ENCODE measurements at regions of chr3 and their contacts with region 1.

Region 1: DNA sequence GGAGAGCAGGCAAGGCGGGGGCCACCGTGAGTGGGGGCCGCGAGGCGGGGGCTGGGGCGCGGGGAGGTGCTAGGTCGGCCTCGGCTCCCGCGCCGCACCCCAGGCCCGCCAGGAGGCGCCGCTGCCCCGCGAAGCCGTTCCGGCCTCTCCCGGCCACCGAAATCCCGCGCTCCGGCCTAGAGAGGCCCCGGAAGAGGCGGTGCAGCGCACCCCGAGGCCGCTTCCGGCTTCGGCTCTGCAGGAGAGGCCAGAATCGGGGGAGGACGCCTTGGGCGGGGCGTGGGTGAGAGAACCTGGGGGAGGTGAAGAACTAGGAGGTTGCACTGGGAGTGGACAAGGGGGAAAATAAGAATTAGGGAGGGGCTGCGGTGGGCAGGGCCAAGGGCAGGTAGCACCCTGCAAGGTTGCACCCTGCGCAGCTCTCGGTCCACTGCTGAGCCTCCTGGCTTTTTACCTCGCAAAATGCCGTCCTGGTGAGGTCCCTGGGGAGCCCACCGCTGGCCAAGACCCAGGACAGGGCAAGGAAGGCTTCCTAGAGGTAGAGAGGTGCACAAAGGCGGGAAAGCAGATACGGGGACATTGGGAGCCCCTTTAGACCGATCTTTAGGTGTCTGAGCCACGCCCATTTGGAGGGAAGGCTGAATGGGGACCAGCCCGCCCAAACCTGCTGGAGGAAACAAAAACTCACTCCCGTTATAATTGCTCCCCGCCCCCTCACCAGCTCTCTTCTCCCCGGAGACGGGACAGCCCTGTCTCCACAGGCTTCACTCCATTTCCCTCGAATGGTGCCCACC is 8.4 kb upstream of the GNAI2 start:
- DNase-seq: peak; percentile 93
- H3K4me3 Mint-ChIP-seq: peak overlapping the region; percentile 82
- H3K27ac Mint-ChIP-seq: peak overlapping the region; percentile 91
- H3K4me1 Mint-ChIP-seq: peaks cover 35% of the 10 kb centered on the region
- H3K27me3 Mint-ChIP-seq: peaks cover 10% of the 10 kb centered on the region

Region 2: DNA sequence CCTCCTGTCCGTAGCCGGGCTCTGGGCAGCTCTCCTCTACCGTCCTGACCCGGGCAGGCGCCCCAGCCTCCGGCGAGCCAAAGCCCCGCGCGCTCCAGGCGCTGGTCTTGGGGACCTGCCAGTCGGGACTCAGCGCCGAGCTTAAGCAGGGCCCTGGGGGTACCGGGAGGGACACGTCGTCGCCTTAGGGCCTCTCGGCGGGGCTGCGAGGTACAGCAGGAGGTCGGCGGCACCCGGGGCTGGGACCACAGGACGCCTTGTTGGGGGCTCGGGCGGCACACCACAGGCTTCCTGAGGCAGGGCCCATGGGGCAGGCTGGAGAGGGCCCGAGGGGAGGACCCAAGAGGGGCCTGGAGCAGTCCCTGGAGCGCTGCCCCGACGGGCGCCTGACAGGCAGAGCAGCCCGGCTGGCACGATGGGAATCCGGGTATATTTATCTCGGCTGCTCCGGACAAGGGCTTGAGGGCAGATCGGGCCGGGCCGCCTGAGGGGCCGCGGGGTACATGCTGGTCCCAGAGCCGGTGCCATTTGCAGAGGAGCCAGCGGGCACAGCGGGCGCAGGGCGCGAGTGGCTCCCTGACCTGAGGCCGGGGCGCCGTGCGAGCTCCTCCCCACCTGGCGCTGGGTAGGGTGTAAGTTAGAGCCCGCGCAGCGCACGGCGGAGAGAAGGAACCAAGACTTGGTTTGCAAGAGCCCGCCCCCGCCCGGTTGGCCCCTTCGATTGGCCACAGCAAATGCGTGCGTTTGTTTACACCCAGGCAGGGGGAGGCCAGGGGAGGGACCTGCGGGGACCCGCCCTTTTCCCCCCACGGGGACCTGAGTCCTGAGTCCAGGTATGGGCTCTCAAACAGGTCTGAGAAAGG is 21.9 kb before region 1 on chr3:
- CTCF ChIA-PET with region 1: interaction called, 27 read pairs
- POLR2A ChIA-PET with region 1: no interaction called
- DNase-seq: peak; percentile 42
- H3K4me3 Mint-ChIP-seq: no peak overlapping the region
- H3K27ac Mint-ChIP-seq: no peak overlapping the region
- H3K4me1 Mint-ChIP-seq: peaks cover 2% of the 10 kb centered on the region
- H3K27me3 Mint-ChIP-seq: peaks cover 48% of the 10 kb centered on the region

Region 3: DNA sequence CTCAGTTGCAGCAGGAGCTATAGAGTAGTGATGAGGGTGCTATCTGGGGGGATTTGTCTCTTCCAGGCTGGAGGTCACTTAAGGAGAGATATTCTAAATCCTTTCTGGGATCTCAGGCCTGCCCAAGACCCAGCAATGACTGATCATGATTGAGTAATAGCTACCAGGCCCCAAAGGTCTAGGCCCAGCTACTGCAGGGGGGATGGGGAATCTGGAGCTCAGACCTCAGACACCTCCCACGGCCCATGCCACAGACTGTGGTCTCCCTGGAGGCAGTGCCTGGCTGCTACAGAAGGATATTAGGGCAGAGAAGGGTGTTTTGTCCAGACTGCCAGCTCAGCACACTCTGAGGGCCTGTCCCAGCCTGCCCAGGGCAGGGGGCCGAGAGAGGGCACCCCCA is 15.7 kb before region 1 on chr3:
- CTCF ChIA-PET with region 1: interaction called, 27 read pairs
- POLR2A ChIA-PET with region 1: no interaction called
- DNase-seq: no peak
- H3K4me3 Mint-ChIP-seq: no peak overlapping the region
- H3K27ac Mint-ChIP-seq: no peak overlapping the region
- H3K4me1 Mint-ChIP-seq: no peaks in the 10 kb centered on the region
- H3K27me3 Mint-ChIP-seq: peaks cover 10% of the 10 kb centered on the region

Region 4: DNA sequence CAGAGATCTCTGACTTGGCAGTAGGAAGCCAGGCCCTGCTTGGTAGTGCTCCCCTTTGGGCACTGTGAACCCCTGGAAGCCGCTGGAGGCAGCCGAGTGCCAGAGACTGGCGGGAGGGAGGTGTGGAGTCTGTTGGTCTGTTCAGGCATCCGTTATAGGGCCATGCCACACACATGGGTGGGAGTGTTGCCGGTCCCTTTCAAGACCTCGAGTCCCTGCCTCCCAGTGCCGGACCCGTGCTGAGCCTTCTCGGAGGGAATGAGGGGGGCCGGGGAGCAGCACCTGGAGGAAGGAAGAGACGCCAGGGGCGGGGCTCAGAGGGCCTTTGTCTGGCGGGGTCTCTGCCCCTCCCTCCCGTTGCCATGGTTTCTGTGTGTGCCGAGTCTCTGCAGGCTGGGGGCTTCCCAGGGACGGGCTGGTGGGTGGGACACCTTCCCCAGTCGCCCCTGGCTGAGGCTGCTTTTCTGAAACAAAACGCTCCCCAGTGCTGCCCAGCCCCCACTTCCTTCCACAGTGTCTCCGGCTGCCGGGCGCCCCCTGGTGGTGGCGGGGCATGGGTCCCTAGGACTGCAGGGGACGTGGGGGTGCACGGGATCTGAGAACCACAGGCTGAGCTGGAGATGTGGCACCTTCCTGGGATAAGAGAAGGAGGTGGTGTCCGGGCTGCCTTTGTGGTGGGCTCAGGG is 18.4 kb after region 1 on chr3:
- CTCF ChIA-PET with region 1: interaction called, 212 read pairs
- POLR2A ChIA-PET with region 1: interaction called, 4 read pairs
- DNase-seq: peak; percentile 95
- H3K4me3 Mint-ChIP-seq: peak overlapping the region; percentile 75
- H3K27ac Mint-ChIP-seq: peak overlapping the region; percentile 93
- H3K4me1 Mint-ChIP-seq: peaks cover 74% of the 10 kb centered on the region
- H3K27me3 Mint-ChIP-seq: no peaks in the 10 kb centered on the region

Measured in activated CD4-positive, alpha-beta T cell treated with anti-CD3 and anti-CD28 coated beads, Interleukin-2, amount 10 ng/mL, durations not matched to agents 7 days and 5 days (primary cell).